Activated CD8-positive, alpha-beta memory T cell treated with anti-CD3 and anti-CD28 coated beads, Interleukin-2, amount 10 ng/mL, durations not matched to agents 7 days and 5 days (primary cell): ENCODE measurements at regions of chr1 and their contacts with region 1.

Region 1: GRCh38 chr1:150922519-150922975 is 3.6 kb upstream of the SETDB1 start:
- DNase-seq: peak; percentile 91
- ATAC-seq: peak; percentile 54
- H3K4me3 Mint-ChIP-seq: no peak overlapping the region
- H3K27ac Mint-ChIP-seq: peak overlapping the region; percentile 2
- H3K4me1 Mint-ChIP-seq: peaks cover 28% of the 10 kb centered on the region
- H3K27me3 Mint-ChIP-seq: no peaks in the 10 kb centered on the region

Region 2: GRCh38 chr1:150875207-150876118 is 47.1 kb before region 1 on chr1:
- CTCF ChIA-PET with region 1: interaction called, 13 read pairs
- DNase-seq: peak; percentile 44
- ATAC-seq: no peak
- H3K4me3 Mint-ChIP-seq: peak overlapping the region; percentile 94
- H3K27ac Mint-ChIP-seq: peak overlapping the region; percentile 91
- H3K4me1 Mint-ChIP-seq: peaks cover 35% of the 10 kb centered on the region
- H3K27me3 Mint-ChIP-seq: no peaks in the 10 kb centered on the region

Region 3: GRCh38 chr1:150890033-150890416 is 32.5 kb before region 1 on chr1:
- CTCF ChIA-PET with region 1: interaction called, 22 read pairs
- DNase-seq: no peak
- ATAC-seq: peak; percentile 85
- H3K4me3 Mint-ChIP-seq: peak overlapping the region; percentile 35
- H3K27ac Mint-ChIP-seq: peak overlapping the region; percentile 82
- H3K4me1 Mint-ChIP-seq: peaks cover 38% of the 10 kb centered on the region
- H3K27me3 Mint-ChIP-seq: no peaks in the 10 kb centered on the region